HCT116 (cell line): ENCODE measurements at regions of chr13 and their contacts with region 1.

Region 1: DNA sequence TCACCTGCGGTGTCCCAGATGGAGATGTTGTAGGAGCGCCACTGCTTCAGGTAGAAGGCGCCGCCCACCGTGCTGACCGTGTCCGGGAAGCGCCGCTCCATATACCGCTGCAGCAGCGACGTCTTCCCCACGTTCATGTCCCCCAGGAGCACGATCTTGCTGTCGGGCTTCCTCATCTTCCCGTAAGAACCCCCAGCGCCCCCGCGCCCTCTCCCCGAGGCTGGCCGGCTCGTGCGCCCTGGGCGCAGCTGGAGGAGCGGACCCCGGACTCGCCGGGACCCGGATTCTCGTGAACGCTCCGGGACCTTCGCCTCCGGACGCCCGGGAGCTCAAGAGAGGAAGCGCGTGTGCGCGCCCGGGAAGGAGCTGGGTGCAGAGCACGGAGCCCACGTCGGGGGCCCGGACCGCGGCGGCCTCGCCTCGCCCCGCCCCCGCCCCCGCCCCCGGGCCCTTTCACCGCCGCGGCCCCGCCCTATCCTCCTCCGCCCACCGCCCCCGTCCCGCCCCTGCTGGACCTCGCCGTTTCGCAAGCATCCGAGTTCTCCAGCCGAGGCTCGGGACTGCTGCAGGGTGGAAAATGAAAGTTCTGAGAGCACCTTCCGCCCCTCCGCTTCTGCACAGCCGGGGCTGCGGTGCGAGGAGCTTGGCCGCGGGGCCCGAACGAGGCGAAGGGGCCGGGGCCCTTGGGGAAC is at the start of gene RAB20:
- DNase-seq: peak; percentile 38
- ATAC-seq: peak; percentile 82
- H3K4me3 ChIP-seq: peak within 1 kb of the TSS; percentile 67 to 82
- H3K27ac ChIP-seq: peak within 1 kb of the TSS; percentile 87
- H3K4me1 ChIP-seq: peaks cover 24 to 28% of the 10 kb centered on the region in 2 experiments
- H3K27me3 ChIP-seq: no peaks in the 10 kb centered on the region
- CTCF ChIP-seq: no peak
- POLR2A ChIP-seq: peak; percentile 45
- RAD21 ChIP-seq: no peak; the same call in 1 of the 2 replicates
- total RNA-seq, gene RAB20: 10.6 TPM

Region 2: DNA sequence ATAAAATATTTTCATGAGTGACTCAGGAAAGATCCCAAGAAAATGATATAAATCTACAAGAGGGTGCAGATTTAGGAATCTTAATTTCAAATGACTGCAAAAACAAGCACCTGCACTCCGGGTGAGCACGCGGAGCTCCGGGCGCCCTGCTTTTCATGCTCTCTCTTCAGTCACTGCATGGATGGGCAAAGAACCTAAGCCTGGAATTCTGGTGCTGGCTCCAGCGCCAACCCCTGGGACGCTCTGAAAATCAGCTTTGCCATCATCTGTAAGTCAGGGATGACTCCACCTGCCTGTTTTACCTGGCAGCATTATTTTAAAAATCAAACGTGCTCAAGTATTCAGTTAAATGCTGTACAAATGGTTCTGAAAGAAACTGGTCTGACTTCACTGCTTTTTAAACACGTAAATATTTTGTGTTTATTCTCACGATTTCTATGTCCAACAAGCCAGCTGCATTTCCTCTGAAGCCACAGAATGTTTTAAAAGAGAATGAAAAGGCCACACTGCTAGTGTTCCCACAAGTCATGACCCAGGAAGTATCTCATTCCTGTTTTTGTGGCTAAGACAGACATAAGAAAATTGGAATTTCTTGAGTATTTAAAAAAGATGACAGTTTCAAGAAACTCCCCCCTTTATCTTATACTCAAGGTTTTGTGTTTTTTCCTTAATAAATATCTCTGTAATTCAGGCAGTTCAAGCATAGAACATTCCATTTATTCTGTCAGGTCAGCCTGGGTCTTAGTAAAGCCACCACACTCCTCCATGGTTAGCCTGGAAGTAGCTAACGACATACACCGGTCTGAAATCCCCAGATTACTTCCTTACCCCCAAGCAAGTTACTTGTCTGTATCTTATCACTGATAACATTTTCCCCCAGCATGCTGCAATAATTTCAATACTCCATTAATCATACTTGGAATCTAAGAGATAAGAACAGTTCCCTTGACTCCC is 335.6 kb before region 1 on chr13:
- CTCF ChIA-PET with region 1: no interaction called
- POLR2A ChIA-PET with region 1: no interaction called
- RAD21 ChIA-PET with region 1: no interaction called
- intact Hi-C with region 1: loop called (anchors 10 kb)
- DNase-seq: no peak
- ATAC-seq: no peak
- H3K4me3 ChIP-seq: no peak overlapping the region
- H3K27ac ChIP-seq: no peak overlapping the region
- H3K4me1 ChIP-seq: peaks cover 0 to 4% of the 10 kb centered on the region in 2 experiments; a peak in 1 of 4 replicates
- H3K27me3 ChIP-seq: no peaks in the 10 kb centered on the region
- CTCF ChIP-seq: no peak
- POLR2A ChIP-seq: no peak
- RAD21 ChIP-seq: no peak

Region 3: DNA sequence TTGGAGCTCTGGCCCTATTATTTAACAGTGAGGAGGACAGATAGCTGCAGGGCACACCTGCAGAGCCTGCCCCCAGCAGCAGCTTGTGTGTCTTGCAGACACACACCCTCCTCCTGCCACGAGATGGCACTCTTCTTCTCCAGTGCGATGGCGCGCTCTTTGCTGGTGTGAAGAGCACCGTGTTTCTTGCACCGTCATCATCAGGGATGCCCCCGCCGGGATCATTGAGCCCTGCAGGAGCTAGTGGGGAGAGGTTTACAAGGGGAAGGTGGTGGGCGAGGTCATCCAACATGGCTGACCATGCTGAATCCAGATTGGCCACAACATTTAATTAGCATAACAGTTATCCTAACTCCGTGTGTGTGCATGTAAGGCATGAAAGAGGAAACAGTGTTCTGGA is 105.5 kb before region 1 on chr13:
- CTCF ChIA-PET with region 1: interaction called, 9 read pairs
- POLR2A ChIA-PET with region 1: no interaction called
- RAD21 ChIA-PET with region 1: interaction called in 1 of 2 experiments, 3 read pairs
- intact Hi-C with region 1: loop called (anchors 10 kb)
- DNase-seq: peak; percentile 81
- ATAC-seq: peak; percentile 98
- H3K4me3 ChIP-seq: peak overlapping the region; percentile 4 to 18; a peak in 1 of 4 replicates
- H3K27ac ChIP-seq: no peak overlapping the region
- H3K4me1 ChIP-seq: peaks cover 0 to 17% of the 10 kb centered on the region in 2 experiments; a peak in 3 of 4 replicates
- H3K27me3 ChIP-seq: no peaks in the 10 kb centered on the region
- CTCF ChIP-seq: peak; percentile 92 to 94 (median 93)
- POLR2A ChIP-seq: no peak
- RAD21 ChIP-seq: peak; percentile 96

Region 4: DNA sequence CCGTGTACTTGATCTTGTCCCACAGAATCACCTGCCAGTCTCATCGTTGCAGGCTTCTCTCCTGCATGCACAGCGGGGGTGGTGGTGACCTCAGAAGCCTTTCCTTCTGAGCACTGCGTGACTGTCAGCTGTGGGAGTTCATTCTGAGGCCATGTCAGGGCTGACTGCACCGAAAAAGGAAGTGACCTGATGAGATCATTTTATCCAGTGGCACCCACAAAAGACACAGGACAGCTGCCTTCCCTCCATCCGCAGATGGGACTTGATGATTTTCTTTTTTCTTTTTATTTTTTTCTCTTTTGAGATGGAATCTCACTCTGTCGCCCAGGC is 89.7 kb before region 1 on chr13:
- CTCF ChIA-PET with region 1: no interaction called
- POLR2A ChIA-PET with region 1: no interaction called
- RAD21 ChIA-PET with region 1: no interaction called
- intact Hi-C with region 1: no loop called
- DNase-seq: no peak
- ATAC-seq: no peak
- H3K4me3 ChIP-seq: no peak overlapping the region
- H3K27ac ChIP-seq: no peak overlapping the region
- H3K4me1 ChIP-seq: no peaks in the 10 kb centered on the region
- H3K27me3 ChIP-seq: no peaks in the 10 kb centered on the region; the same call in 1 of the 2 replicates
- CTCF ChIP-seq: no peak
- POLR2A ChIP-seq: no peak
- RAD21 ChIP-seq: no peak

Region 5: DNA sequence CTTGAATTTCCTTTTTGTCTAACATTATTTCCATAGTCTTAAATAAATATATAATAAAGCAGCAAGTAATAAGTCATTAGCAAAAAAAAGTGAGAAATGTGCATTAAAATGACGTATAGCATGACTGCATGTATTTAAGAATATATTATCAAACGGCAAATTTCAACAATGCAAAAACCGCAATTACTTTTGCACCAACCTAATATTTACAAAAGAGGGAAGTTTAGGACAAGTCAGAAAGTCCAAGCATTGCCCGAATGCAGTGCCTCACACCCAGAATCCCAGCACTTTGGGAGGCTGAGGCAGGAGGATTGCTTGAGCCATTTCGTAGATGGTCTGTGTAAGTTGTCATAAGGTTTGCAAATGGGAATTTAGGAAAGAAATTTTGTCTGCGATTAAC is 43.6 kb after region 1 on chr13:
- CTCF ChIA-PET with region 1: no interaction called
- POLR2A ChIA-PET with region 1: no interaction called
- RAD21 ChIA-PET with region 1: no interaction called
- intact Hi-C with region 1: no loop called
- DNase-seq: no peak
- ATAC-seq: no peak
- H3K4me3 ChIP-seq: no peak overlapping the region
- H3K27ac ChIP-seq: no peak overlapping the region
- H3K4me1 ChIP-seq: peaks cover 0 to 1% of the 10 kb centered on the region in 2 experiments; a peak in 1 of 4 replicates
- H3K27me3 ChIP-seq: no peaks in the 10 kb centered on the region
- CTCF ChIP-seq: no peak
- POLR2A ChIP-seq: no peak
- RAD21 ChIP-seq: no peak